CD8-positive, alpha-beta T cell (primary cell): ENCODE measurements at regions of chr12 and their contacts with region 1.

Region 1: DNA sequence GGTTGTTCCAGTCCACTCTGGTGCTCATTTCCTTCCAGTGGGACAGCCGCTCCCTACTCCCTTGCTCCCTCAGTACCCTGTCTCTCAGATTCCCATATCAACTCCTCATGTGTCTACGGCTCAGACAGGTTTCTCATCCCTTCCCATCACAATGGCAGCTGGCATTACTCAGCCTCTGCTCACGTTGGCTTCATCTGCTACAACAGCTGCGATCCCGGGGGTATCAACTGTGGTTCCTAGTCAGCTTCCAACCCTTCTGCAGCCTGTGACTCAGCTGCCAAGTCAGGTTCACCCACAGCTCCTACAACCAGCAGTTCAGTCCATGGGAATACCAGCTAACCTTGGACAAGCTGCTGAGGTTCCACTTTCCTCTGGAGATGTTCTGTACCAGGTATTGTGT is 69.9 kb downstream of the RAD52 start:
- DNase-seq: no peak
- ATAC-seq: no peak
- H3K4me3 ChIP-seq: no peak overlapping the region
- H3K4me3 Mint-ChIP-seq: no peak overlapping the region
- H3K27ac ChIP-seq: no peak overlapping the region
- H3K27ac Mint-ChIP-seq: no peak overlapping the region
- H3K4me1 ChIP-seq: no peaks in the 10 kb centered on the region
- H3K4me1 Mint-ChIP-seq: no peaks in the 10 kb centered on the region
- H3K27me3 ChIP-seq: no peaks in the 10 kb centered on the region
- H3K27me3 Mint-ChIP-seq: no peaks in the 10 kb centered on the region
- CTCF ChIP-seq: no peak

Region 2: GRCh38 chr12:851913-852312 is 27.7 kb before region 1 on chr12:
- CTCF ChIA-PET with region 1: no interaction called
- POLR2A ChIA-PET with region 1: no interaction called
- intact Hi-C with region 1: no loop called
- DNase-seq: no peak
- ATAC-seq: no peak
- H3K4me3 ChIP-seq: no peak overlapping the region
- H3K4me3 Mint-ChIP-seq: no peak overlapping the region
- H3K27ac ChIP-seq: no peak overlapping the region
- H3K27ac Mint-ChIP-seq: no peak overlapping the region
- H3K4me1 ChIP-seq: peaks cover 17% of the 10 kb centered on the region
- H3K4me1 Mint-ChIP-seq: peaks cover 63% of the 10 kb centered on the region
- H3K27me3 ChIP-seq: no peaks in the 10 kb centered on the region
- H3K27me3 Mint-ChIP-seq: no peaks in the 10 kb centered on the region
- CTCF ChIP-seq: no peak

Region 3: DNA sequence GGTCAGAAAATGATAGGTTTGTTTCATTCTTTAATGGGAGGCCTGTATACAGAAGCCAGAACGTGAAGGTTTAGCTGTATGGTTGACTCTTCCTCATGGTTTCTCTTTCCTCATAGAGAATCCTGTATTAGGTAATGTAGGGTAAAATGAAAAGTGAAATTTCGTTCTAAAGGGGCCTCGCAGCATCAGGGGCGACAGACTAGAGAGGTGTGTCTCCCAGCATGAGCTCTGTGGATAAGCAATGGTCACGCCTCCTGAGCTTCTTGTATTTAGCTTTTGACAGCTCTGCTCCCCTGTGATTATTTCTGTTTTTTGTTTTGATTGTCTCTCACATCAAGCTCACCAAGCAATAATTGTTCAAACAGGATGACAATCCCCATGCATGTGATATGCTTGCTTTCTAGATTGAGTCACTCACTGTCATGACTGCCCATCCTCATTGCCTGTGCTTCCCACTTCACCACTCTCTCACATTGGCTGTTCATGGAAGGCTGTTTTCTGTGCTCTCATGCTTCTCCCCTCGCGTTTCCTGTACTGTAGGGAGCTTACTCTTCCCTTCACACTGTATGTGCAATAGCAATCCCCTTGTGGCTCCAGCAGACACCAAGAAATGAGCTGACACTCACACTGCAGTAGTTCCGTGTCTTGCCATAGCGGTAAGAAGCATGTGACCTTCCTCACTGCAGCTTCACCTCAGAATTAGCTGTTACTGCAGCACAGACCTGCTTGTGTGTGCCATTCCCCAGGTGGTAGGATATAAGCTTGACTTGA is 25.8 kb after region 1 on chr12:
- CTCF ChIA-PET with region 1: no interaction called
- POLR2A ChIA-PET with region 1: no interaction called
- intact Hi-C with region 1: no loop called
- DNase-seq: peak in 4 of 9 experiments; percentile 13 to 51 (median 32)
- ATAC-seq: peak; percentile 78
- H3K4me3 ChIP-seq: no peak overlapping the region
- H3K4me3 Mint-ChIP-seq: peak overlapping the region; percentile 40
- H3K27ac ChIP-seq: peak overlapping the region in 1 of 2 experiments; percentile 6
- H3K27ac Mint-ChIP-seq: peak overlapping the region; percentile 78
- H3K4me1 ChIP-seq: peaks cover 18% of the 10 kb centered on the region
- H3K4me1 Mint-ChIP-seq: peaks cover 37% of the 10 kb centered on the region
- H3K27me3 ChIP-seq: no peaks in the 10 kb centered on the region
- H3K27me3 Mint-ChIP-seq: no peaks in the 10 kb centered on the region
- CTCF ChIP-seq: no peak

Region 4: GRCh38 chr12:931591-931990 is 52.0 kb after region 1 on chr12:
- CTCF ChIA-PET with region 1: no interaction called
- POLR2A ChIA-PET with region 1: no interaction called
- intact Hi-C with region 1: loop called in 1 of 2 experiments (anchors 5 kb)
- DNase-seq: no peak
- ATAC-seq: no peak
- H3K4me3 ChIP-seq: no peak overlapping the region
- H3K4me3 Mint-ChIP-seq: no peak overlapping the region
- H3K27ac ChIP-seq: no peak overlapping the region
- H3K27ac Mint-ChIP-seq: no peak overlapping the region
- H3K4me1 ChIP-seq: no peaks in the 10 kb centered on the region
- H3K4me1 Mint-ChIP-seq: no peaks in the 10 kb centered on the region
- H3K27me3 ChIP-seq: no peaks in the 10 kb centered on the region
- H3K27me3 Mint-ChIP-seq: no peaks in the 10 kb centered on the region
- CTCF ChIP-seq: no peak